PC-9 (cell line): ENCODE measurements at regions of chr20 and their contacts with region 1.

Region 1: GRCh38 chr20:57693002-57693640 is 16.7 kb downstream of the PMEPA1 start:
- DNase-seq: peak; percentile 98 to 100
- H3K4me3 ChIP-seq: peak overlapping the region; percentile 38; the same call in 1 of the 2 replicates
- H3K27ac ChIP-seq: peak overlapping the region; percentile 96
- H3K4me1 ChIP-seq: peaks cover 96% of the 10 kb centered on the region
- H3K27me3 ChIP-seq: no peaks in the 10 kb centered on the region
- CTCF ChIP-seq: peak; percentile 77

Region 2: DNA sequence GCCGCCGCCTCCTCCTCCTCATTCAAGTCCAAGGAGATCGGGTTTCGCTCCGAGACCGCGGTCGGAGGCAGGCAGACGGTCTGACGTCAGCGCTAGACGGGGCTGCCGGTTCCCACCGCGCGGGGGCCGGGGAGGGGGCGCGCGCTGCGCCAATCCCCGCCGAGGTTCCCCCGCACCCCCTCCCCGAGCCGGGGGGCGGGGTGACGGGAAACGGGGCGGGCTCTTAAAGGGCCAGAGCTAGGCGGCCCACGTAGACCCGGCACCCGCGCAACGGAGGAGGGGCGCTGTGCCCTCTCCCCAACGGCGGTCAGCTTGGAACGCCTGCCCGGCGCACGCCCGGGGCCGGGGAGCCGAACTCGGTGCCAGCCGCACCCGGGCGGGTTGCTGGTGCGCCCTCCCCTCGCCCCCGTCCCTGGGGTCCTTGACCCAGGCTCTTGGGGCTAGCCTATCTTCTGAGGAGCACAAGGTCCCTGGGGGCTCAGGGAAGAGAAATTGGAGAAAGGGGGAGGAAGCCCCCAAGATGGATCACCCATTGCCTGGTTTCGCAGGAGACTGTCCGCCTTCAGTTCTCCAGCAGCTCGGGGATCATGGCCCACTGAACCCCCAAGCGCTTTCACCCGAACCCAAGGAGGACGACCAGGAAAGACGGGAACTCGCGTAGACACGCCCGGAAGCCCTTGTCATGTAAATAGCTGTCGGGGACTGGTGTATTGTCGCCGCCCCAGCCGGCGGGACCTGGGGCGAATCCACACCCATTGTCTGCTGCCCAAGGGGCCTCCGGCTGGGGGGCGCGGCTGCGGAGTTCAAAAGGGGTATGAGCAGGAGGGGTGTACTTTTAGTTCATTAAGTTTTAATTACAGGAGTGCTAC is 17.0 kb after region 1 on chr20 and contains the start of gene PMEPA1:
- CTCF ChIA-PET with region 1: interaction called, 7 read pairs
- POLR2A ChIA-PET with region 1: interaction called, 25 read pairs
- intact Hi-C with region 1: loop called (anchors 2 kb)
- DNase-seq: peak; percentile 92 to 99
- H3K4me3 ChIP-seq: peak within 1 kb of the TSS; percentile 98
- H3K27ac ChIP-seq: peak within 1 kb of the TSS; percentile 77
- H3K4me1 ChIP-seq: peaks cover 59% of the 10 kb centered on the region
- H3K27me3 ChIP-seq: no peaks in the 10 kb centered on the region
- CTCF ChIP-seq: no peak
- total RNA-seq, gene PMEPA1: 163 and 177 TPM in 2 replicates

Region 3: GRCh38 chr20:57813509-57814194 is 120.5 kb after region 1 on chr20:
- CTCF ChIA-PET with region 1: no interaction called
- POLR2A ChIA-PET with region 1: no interaction called
- intact Hi-C with region 1: no loop called
- DNase-seq: peak in 1 of 2 experiments; percentile 28
- H3K4me3 ChIP-seq: no peak overlapping the region
- H3K27ac ChIP-seq: no peak overlapping the region
- H3K4me1 ChIP-seq: peaks cover 25% of the 10 kb centered on the region
- H3K27me3 ChIP-seq: no peaks in the 10 kb centered on the region
- CTCF ChIP-seq: no peak

Region 4: DNA sequence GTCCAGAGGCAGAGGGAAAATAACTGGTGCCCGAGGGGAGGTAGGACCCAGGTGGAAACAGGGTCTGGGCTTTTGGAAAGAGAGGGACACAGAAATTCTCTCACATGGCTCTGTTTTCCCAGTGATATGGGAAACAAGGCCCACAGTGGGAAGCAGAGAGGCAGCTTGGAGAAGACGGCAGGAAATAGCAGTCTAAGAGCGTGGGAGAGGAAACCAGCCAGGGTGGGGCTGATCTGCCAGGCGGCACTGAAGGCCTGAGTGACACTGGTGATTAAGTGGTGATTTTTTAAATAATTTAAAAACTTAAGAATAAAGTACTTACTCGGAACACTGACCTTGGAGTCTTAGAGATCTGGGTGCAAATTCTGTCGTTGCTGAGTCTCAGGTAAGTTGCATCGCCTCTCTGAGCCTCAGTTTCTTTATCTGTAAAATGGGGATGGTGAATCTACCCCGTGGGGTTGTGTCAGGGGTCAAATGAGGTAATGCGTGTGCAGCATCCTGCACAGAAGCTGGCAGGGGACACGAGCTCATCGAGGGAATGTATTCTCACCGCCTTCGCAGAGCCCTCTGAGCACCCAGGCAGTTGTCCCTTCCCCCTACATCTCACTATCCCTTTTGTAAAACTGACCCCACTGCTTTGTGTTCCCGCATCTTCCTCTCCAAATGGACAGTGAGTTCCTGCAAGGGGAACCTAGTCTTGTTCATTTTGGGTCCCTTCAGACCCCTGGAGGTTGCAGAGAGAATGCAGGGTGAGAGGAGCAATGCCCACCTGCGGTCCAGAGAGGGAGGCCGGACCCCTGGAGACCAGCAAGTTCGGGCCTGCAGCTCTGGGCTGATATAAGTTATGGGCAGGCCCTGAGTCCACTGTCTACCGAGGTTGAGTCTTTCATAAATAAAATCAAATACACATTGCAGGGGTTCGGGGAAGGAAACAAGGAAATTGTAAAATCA is 245.3 kb after region 1 on chr20:
- CTCF ChIA-PET with region 1: interaction called, 3 read pairs
- POLR2A ChIA-PET with region 1: no interaction called
- intact Hi-C with region 1: loop called (anchors 2 kb)
- DNase-seq: no peak
- H3K4me3 ChIP-seq: no peak overlapping the region
- H3K27ac ChIP-seq: peak overlapping the region; percentile 71
- H3K4me1 ChIP-seq: peaks cover 44% of the 10 kb centered on the region
- H3K27me3 ChIP-seq: no peaks in the 10 kb centered on the region
- CTCF ChIP-seq: no peak; the same call in 1 of the 2 replicates

Region 5: GRCh38 chr20:58087193-58087858 is 394.2 kb after region 1 on chr20:
- CTCF ChIA-PET with region 1: no interaction called
- POLR2A ChIA-PET with region 1: no interaction called
- intact Hi-C with region 1: loop called (anchors 2 kb)
- DNase-seq: peak; percentile 50 to 52
- H3K4me3 ChIP-seq: no peak overlapping the region
- H3K27ac ChIP-seq: no peak overlapping the region
- H3K4me1 ChIP-seq: 0 out of 2 replicates have a peak, but pooled peaks cover 9% of the 10 kb centered on the region
- H3K27me3 ChIP-seq: no peaks in the 10 kb centered on the region
- CTCF ChIP-seq: peak; percentile 95

Region 6: DNA sequence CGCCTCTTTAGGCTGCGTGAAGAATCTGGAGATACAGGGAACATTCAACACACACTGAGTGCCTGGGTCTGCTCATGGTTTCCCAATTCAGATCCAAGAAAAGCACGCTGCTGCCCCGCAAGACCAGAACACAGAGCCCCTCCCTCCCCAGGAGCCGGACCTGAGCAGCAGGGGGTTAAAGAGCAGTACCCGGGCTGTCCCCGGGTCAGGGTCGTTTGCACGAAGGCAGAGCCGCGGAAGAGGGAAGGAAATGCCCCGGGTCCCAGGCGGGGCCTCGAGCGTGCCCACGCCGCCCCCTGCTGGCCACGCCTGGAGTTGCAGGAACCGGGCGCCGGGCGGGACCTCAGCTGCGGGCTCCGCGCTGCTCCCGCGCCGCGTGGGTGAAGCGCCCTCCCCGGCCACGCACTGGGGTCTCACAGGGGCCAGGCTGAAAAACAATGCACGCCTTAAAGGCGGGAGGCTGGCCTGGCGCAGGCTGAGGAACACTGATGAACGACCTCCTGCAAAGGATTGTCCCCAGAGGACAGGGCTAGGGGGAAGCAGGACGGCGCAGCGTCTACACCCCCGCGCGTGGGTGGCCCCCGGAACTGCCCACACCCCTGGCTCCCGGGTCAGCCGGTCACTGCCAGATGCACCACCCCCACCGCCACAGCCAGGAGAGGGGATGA is 486.4 kb after region 1 on chr20:
- CTCF ChIA-PET with region 1: no interaction called
- POLR2A ChIA-PET with region 1: interaction called, 3 read pairs
- intact Hi-C with region 1: loop called (anchors 1 kb)
- DNase-seq: peak in 1 of 2 experiments; percentile 73
- H3K4me3 ChIP-seq: peak overlapping the region; percentile 40
- H3K27ac ChIP-seq: no peak overlapping the region
- H3K4me1 ChIP-seq: peaks cover 15% of the 10 kb centered on the region
- H3K27me3 ChIP-seq: no peaks in the 10 kb centered on the region
- CTCF ChIP-seq: peak; percentile 99

Region 7: DNA sequence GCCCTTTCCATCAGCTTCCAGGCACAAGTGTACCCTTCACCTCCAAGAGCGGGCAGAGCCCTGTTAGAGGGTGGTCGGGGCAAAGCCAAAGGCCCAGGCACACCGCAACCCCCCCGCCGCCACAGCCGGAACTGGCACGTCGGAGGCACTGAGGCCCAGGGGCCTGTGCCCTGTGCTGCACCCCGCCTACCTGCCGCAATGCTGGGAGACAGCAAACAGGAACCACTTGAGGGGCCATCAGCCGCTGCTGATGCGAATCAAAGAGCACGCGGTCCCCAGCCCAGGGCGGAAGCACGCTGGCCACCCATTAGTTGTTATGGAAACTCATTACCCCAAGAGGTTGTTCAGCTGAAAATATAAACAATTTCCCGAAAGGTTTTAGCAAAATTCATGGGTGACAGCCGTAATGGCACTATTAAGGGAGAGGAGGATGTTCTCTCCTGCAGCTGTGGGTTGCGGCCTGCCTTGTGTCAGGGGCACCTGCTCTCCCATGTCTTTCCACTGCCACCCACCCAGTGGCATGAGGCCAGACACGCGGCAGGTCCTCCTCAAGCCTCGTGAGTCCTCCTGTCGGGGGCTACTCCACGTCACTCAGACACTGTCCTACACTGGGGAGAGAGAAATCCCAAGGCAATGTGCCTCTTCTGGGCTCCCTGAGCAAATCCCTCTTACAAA is 1672.6 kb after region 1 on chr20:
- CTCF ChIA-PET with region 1: no interaction called
- POLR2A ChIA-PET with region 1: no interaction called
- intact Hi-C with region 1: no loop called
- DNase-seq: no peak
- H3K4me3 ChIP-seq: no peak overlapping the region
- H3K27ac ChIP-seq: no peak overlapping the region
- H3K4me1 ChIP-seq: no peaks in the 10 kb centered on the region
- H3K27me3 ChIP-seq: peaks cover 81% of the 10 kb centered on the region
- CTCF ChIP-seq: no peak